Psoas muscle (tissue), 8 donors: ENCODE measurements at regions of chr1 and their contacts with region 1.

Region 1: GRCh38 chr1:35202048-35202719 is 9.2 kb upstream of the SFPQ start:
- DNase-seq: peak; percentile 34 to 62
- ATAC-seq: peak; percentile 91 to 99 (median 95)
- H3K4me3 ChIP-seq: peak overlapping the region; percentile 15
- H3K27ac ChIP-seq: no peak overlapping the region
- H3K4me1 ChIP-seq: no peaks in the 10 kb centered on the region
- H3K27me3 ChIP-seq: no peaks in the 10 kb centered on the region
- CTCF ChIP-seq: peak; percentile 86

Region 2: GRCh38 chr1:34272152-34272551 is 930.0 kb before region 1 on chr1:
- intact Hi-C with region 1: no loop called
- DNase-seq: no peak
- ATAC-seq: no peak
- H3K4me3 ChIP-seq: no peak overlapping the region
- H3K27ac ChIP-seq: no peak overlapping the region
- H3K4me1 ChIP-seq: no peaks in the 10 kb centered on the region
- H3K27me3 ChIP-seq: peaks cover 0 to 4% (median 0%) of the 10 kb centered on the region in 3 donors
- CTCF ChIP-seq: no peak

Region 3: GRCh38 chr1:35298464-35298863 is 96.3 kb after region 1 on chr1:
- intact Hi-C with region 1: loop called (anchors 2 to 5 kb)
- DNase-seq: peak in 1 of 2 donors; percentile 41
- ATAC-seq: peak; percentile 65 to 82 (median 78)
- H3K4me3 ChIP-seq: no peak overlapping the region
- H3K27ac ChIP-seq: no peak overlapping the region
- H3K4me1 ChIP-seq: peaks cover 12% of the 10 kb centered on the region
- H3K27me3 ChIP-seq: no peaks in the 10 kb centered on the region
- CTCF ChIP-seq: peak; percentile 39

Region 4: GRCh38 chr1:35406103-35406502 is 203.9 kb after region 1 on chr1:
- intact Hi-C with region 1: loop called in 1 of 2 experiments (anchors 10 kb)
- DNase-seq: no peak
- ATAC-seq: no peak
- H3K4me3 ChIP-seq: no peak overlapping the region
- H3K27ac ChIP-seq: no peak overlapping the region
- H3K4me1 ChIP-seq: no peaks in the 10 kb centered on the region
- H3K27me3 ChIP-seq: no peaks in the 10 kb centered on the region
- CTCF ChIP-seq: no peak